Breast epithelium (tissue), 4 donors: ENCODE measurements at regions of chr1 and their contacts with region 1.

Region 1: GRCh38 chr1:24085546-24085945 is 26.4 kb downstream of the MYOM3 start:
- DNase-seq: no peak
- H3K4me3 ChIP-seq: no peak overlapping the region
- H3K27ac ChIP-seq: no peak overlapping the region
- H3K4me1 ChIP-seq: no peaks in the 10 kb centered on the region
- H3K27me3 ChIP-seq: no peaks in the 10 kb centered on the region
- CTCF ChIP-seq: no peak
- POLR2A ChIP-seq: no peak

Region 2: DNA sequence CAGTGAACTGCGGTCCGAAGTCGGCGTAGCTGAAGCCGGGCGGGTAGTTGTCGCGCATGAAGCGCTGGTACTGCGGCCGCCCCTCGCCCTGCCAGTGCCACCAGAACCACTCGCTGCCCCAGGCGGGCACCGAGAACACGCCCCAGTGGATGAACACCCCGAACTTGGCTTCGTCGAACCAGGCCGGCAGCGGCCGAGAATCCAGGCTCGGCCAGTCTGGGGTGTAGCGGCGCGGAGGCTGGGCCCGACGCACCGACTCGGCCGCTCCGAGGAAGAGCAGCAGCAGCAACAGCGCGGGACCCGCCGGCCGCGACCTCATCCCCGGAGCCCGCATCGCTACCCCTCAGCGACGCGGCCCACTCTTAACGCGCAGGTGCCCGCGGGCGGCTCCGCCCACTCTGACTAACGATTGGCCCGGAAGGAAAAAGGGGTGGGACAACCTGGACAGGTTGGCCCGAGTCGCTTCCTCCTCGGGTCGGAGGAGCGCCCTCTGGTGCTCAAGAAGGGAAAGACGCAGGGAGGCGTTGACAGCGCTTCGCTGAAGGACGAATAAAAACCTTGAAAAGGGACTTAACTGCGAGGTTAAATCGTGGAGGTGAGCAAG is 217.5 kb before region 1 on chr1 and contains the start of gene FUCA1:
- intact Hi-C with region 1: no loop called
- DNase-seq: peak; percentile 87 to 89
- H3K4me3 ChIP-seq: peak within 1 kb of the TSS; percentile 70 to 82 (median 79)
- H3K27ac ChIP-seq: peak within 1 kb of the TSS; percentile 62 to 65
- H3K4me1 ChIP-seq: no peaks in the 10 kb centered on the region
- H3K27me3 ChIP-seq: no peaks in the 10 kb centered on the region
- CTCF ChIP-seq: peak; percentile 70 to 94 (median 85)
- POLR2A ChIP-seq: no peak
- total RNA-seq, gene FUCA1: 26.9 to 45.3 (median 44.2) TPM

Region 3: GRCh38 chr1:25959611-25960010 is 1874.1 kb after region 1 on chr1:
- intact Hi-C with region 1: loop called (anchors 10 kb)
- DNase-seq: no peak
- H3K4me3 ChIP-seq: no peak overlapping the region
- H3K27ac ChIP-seq: no peak overlapping the region
- H3K4me1 ChIP-seq: no peaks in the 10 kb centered on the region
- H3K27me3 ChIP-seq: no peaks in the 10 kb centered on the region
- CTCF ChIP-seq: no peak
- POLR2A ChIP-seq: no peak